Right lobe of liver (tissue), 6 donors: ENCODE measurements at regions of chr17 and their contacts with region 1.

Region 1: GRCh38 chr17:6045621-6046357 is 24.4 kb upstream of the WSCD1 start:
- DNase-seq: no peak
- ATAC-seq: no peak
- H3K4me3 ChIP-seq: no peak overlapping the region
- H3K27ac ChIP-seq: no peak overlapping the region
- H3K4me1 ChIP-seq: peaks cover 0 to 6% (median 2%) of the 10 kb centered on the region in 4 donors
- H3K27me3 ChIP-seq: no peaks in the 10 kb centered on the region
- CTCF ChIP-seq: no peak
- POLR2A ChIP-seq: no peak

Region 2: GRCh38 chr17:5793899-5794298 is 251.9 kb before region 1 on chr17:
- intact Hi-C with region 1: loop called in 1 of 2 experiments (anchors 10 kb)
- DNase-seq: no peak
- ATAC-seq: peak in 1 of 4 donors; percentile 48
- H3K4me3 ChIP-seq: no peak overlapping the region
- H3K27ac ChIP-seq: no peak overlapping the region
- H3K4me1 ChIP-seq: no peaks in the 10 kb centered on the region
- H3K27me3 ChIP-seq: no peaks in the 10 kb centered on the region
- CTCF ChIP-seq: peak in 2 of 4 donors; percentile 10 to 40
- POLR2A ChIP-seq: no peak

Region 3: DNA sequence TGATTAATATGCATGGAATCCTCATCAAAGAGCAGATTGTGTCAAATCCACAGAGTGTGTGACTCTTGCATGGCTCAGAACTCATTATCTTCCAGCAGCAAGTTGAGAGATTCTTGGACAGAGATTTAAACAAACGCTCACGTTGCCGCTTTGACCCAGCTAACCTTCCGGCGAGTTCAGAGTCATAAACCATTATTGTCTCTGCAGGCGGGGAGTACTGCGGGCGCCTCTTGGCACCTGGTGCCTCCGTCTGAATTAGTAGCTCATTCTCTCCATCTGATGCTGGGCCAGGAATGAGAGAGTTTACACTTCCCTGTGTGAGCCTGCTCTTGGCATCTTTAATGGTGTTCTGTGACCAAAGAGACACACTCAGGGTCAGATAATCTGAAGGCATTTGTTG is 114.2 kb before region 1 on chr17:
- intact Hi-C with region 1: no loop called
- DNase-seq: no peak
- ATAC-seq: no peak
- H3K4me3 ChIP-seq: no peak overlapping the region
- H3K27ac ChIP-seq: no peak overlapping the region
- H3K4me1 ChIP-seq: no peaks in the 10 kb centered on the region
- H3K27me3 ChIP-seq: no peaks in the 10 kb centered on the region
- CTCF ChIP-seq: no peak
- POLR2A ChIP-seq: no peak